Activated T-helper 1 cell treated with anti-CD3 and anti-CD28 coated beads, Interleukin-12 subunit alpha, Interleukin-12 subunit beta, Interleukin-2, Interleukin-4 antibody, amounts not matched to agents 30 ng/mL and 10 ng/mL and 1 ng/mL, durations not matched to agents 14 hours and 24 hours and 36 hours (primary cell): ENCODE measurements at regions of chr9 and their contacts with region 1.

Region 1: GRCh38 chr9:124617471-124618141 is 110.4 kb upstream of the NR5A1 start:
- DNase-seq: peak; percentile 47
- H3K4me3 Mint-ChIP-seq: no peak overlapping the region
- H3K27ac Mint-ChIP-seq: peak overlapping the region; percentile 8
- H3K4me1 Mint-ChIP-seq: no peaks in the 10 kb centered on the region
- H3K27me3 Mint-ChIP-seq: peaks cover 2% of the 10 kb centered on the region

Region 2: DNA sequence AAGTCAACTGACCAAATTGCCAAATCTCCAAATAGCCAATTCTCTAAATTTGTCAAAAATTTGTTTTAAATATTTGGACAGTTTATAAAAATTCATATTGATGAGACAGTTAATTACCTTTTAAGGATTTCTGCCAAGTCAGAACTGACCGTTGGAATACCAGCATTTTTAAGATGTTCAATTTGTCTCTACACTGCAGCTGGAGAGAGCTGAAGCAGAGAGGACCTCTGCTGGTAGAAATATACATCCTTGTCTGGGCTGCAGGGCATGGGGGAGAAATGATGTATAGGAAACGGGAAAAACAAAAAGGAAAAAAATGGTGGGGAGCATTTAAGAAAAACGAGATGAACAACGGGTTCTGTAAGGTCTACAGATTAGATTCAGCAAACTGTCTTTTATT is 136.7 kb after region 1 on chr9:
- intact Hi-C with region 1: loop called (anchors 2 kb)
- DNase-seq: no peak
- H3K4me3 Mint-ChIP-seq: no peak overlapping the region
- H3K27ac Mint-ChIP-seq: no peak overlapping the region
- H3K4me1 Mint-ChIP-seq: no peaks in the 10 kb centered on the region
- H3K27me3 Mint-ChIP-seq: peaks cover 42% of the 10 kb centered on the region

Region 3: GRCh38 chr9:124764774-124765438 is 147.3 kb after region 1 on chr9:
- intact Hi-C with region 1: loop called (anchors 2 kb)
- DNase-seq: no peak
- H3K4me3 Mint-ChIP-seq: no peak overlapping the region
- H3K27ac Mint-ChIP-seq: no peak overlapping the region
- H3K4me1 Mint-ChIP-seq: peaks cover 14% of the 10 kb centered on the region
- H3K27me3 Mint-ChIP-seq: peaks cover 85% of the 10 kb centered on the region

Region 4: GRCh38 chr9:124852829-124853531 is 235.4 kb after region 1 on chr9 and contains the start of gene WDR38:
- intact Hi-C with region 1: loop called (anchors 1 kb)
- DNase-seq: peak; percentile 79
- H3K4me3 Mint-ChIP-seq: peak within 1 kb of the TSS; percentile 68
- H3K27ac Mint-ChIP-seq: no peak within 1 kb of the TSS
- H3K4me1 Mint-ChIP-seq: peaks cover 16% of the 10 kb centered on the region
- H3K27me3 Mint-ChIP-seq: peaks cover 9% of the 10 kb centered on the region
- total RNA-seq, gene WDR38: not detected in 2 replicates